Heart right ventricle (tissue), 16 donors: ENCODE measurements at regions of chr9 and their contacts with region 1.

Region 1: GRCh38 chr9:135126535-135127187 is 39.2 kb downstream of the OLFM1 start:
- DNase-seq: no peak
- ATAC-seq: peak in 1 of 8 donors; percentile 7
- H3K4me3 ChIP-seq: no peak overlapping the region
- H3K27ac ChIP-seq: no peak overlapping the region
- H3K4me1 ChIP-seq: peaks cover 0 to 9% (median 0%) of the 10 kb centered on the region in 9 donors
- H3K27me3 ChIP-seq: peaks cover 0 to 23% (median 4%) of the 10 kb centered on the region in 7 donors
- CTCF ChIP-seq: no peak

Region 2: DNA sequence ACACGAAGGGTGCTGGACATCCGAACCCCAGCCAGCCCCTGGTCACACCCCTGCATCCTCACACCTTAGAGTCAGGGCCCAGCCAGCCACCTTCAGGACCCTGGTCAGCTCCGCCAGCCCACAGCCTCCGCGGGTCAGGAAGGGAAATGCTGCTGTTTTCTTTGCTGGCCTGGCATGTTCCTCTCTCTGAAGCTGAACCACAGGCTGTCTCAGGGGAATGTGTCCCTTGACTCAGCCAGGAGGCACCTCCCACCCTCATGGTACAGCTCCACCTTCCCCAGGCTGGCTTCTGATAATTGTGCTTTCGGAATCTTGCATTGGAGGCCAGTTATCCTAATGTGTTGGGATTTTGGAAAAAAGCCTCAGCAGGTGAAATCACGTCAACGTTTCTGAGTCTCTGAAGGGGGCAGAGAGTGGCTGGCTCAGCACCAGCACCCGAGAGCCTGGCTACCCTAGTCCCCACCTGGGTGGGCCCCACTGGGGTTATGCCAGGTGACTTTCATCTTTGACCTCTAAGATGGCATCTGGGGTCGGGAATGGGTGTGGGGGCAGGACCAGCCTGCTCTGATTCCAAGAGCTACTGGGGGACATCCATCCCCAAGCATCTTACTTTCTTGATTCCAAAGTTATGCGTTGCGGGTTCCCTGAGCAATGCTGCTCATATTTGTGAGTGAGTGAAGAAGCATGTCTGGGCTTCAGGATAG is 49.0 kb before region 1 on chr9:
- intact Hi-C with region 1: no loop called
- DNase-seq: no peak
- ATAC-seq: peak in 1 of 8 donors; percentile 43
- H3K4me3 ChIP-seq: no peak overlapping the region
- H3K27ac ChIP-seq: no peak overlapping the region
- H3K4me1 ChIP-seq: peaks cover 0 to 19% (median 12%) of the 10 kb centered on the region in 9 donors
- H3K27me3 ChIP-seq: peaks cover 0 to 35% (median 3%) of the 10 kb centered on the region in 7 donors
- CTCF ChIP-seq: no peak

Region 3: DNA sequence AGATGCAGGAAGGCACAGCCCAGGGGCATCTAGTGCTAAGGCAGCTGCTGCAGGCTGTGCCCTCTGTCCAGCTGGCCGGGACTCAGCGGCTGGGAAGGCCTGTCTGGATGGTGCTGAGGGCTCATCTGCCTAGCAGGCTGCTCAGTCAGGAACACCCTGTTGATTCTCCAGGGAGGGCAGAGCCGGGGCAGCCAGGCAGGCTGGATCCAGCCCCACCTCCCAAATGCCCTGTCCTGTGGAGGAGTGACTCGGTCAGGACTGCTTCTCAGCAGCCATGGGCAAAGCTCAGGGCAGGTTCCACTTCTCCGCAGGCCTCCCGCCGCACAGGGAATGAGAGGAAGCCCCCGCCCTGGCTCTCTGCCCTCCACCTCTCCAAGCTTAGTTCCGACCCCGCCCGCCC is 528.7 kb after region 1 on chr9:
- intact Hi-C with region 1: loop called in 1 of 10 experiments (anchors 5 kb)
- DNase-seq: no peak
- ATAC-seq: no peak
- H3K4me3 ChIP-seq: no peak overlapping the region
- H3K27ac ChIP-seq: no peak overlapping the region
- H3K4me1 ChIP-seq: no peaks in the 10 kb centered on the region
- H3K27me3 ChIP-seq: peaks cover 0 to 32% (median 9%) of the 10 kb centered on the region in 7 donors
- CTCF ChIP-seq: no peak